ENCODE measurements at regions of chr21 and their contacts with region 1.

Region 1: GRCh38 chr21:28737674-28738419 is 254.8 kb downstream of the LTN1 start:
- DNase-seq: no peak
- H3K4me3 Mint-ChIP-seq: no peak overlapping the region
- H3K27ac Mint-ChIP-seq: no peak overlapping the region
- H3K4me1 Mint-ChIP-seq: peaks cover 9% of the 10 kb centered on the region
- H3K27me3 Mint-ChIP-seq: no peaks in the 10 kb centered on the region

Region 2: GRCh38 chr21:28624626-28625025 is 113.2 kb before region 1 on chr21:
- intact Hi-C with region 1: no loop called
- DNase-seq: no peak
- H3K4me3 Mint-ChIP-seq: no peak overlapping the region
- H3K27ac Mint-ChIP-seq: no peak overlapping the region
- H3K4me1 Mint-ChIP-seq: peaks cover 7% of the 10 kb centered on the region
- H3K27me3 Mint-ChIP-seq: no peaks in the 10 kb centered on the region

Region 3: GRCh38 chr21:28636988-28637691 is 100.7 kb before region 1 on chr21:
- intact Hi-C with region 1: loop called (anchors 5 kb)
- DNase-seq: no peak
- H3K4me3 Mint-ChIP-seq: no peak overlapping the region
- H3K27ac Mint-ChIP-seq: peak overlapping the region; percentile 45
- H3K4me1 Mint-ChIP-seq: peaks cover 14% of the 10 kb centered on the region
- H3K27me3 Mint-ChIP-seq: no peaks in the 10 kb centered on the region

Region 4: DNA sequence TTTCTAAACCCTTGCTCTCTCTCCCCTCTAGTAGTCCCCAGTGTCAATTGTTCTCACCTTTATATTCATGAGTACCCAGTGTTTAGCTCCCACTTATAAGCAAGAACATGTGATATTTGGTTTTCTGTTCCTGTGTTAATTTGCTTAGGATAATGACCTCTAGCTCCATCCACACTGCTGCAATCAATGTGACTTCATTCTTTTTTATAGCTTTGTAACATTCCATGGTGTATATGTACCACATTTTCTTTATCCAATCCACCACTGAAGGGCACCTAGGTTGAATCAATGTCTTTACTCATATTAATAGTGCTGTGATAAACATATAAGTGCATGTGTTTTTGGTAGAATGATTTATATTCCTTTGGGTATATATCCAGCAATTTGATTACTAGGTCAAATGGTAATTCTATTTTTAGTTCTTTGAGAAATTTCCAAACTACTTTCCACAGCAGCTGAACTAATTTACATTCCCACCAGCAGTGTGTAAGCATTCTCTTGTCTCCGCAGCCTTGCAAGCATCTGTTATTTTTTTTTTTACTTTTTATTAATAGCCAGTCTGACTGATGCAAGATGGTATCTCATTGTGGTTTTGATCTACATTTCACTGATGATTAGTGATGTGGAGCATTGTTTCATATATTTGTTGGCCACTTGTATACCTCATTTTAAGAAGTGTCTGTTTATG is 22.9 kb before region 1 on chr21:
- intact Hi-C with region 1: loop called (anchors 2 kb)
- DNase-seq: no peak
- H3K4me3 Mint-ChIP-seq: no peak overlapping the region
- H3K27ac Mint-ChIP-seq: no peak overlapping the region
- H3K4me1 Mint-ChIP-seq: peaks cover 41% of the 10 kb centered on the region
- H3K27me3 Mint-ChIP-seq: no peaks in the 10 kb centered on the region